GM12878 (cell line): ENCODE measurements at regions of chr5 and their contacts with region 1.

Region 1: GRCh38 chr5:78638423-78638822 is 10.1 kb downstream of the LHFPL2 start:
- DNase-seq: no peak
- ATAC-seq: no peak
- H3K4me3 ChIP-seq: no peak overlapping the region
- H3K27ac ChIP-seq: no peak overlapping the region
- H3K4me1 ChIP-seq: peaks cover 24% of the 10 kb centered on the region
- H3K27me3 ChIP-seq: no peaks in the 10 kb centered on the region
- CTCF ChIP-seq: no peak
- EP300 ChIP-seq: no peak
- POLR2A ChIP-seq: no peak
- RAD21 ChIP-seq: no peak

Region 2: DNA sequence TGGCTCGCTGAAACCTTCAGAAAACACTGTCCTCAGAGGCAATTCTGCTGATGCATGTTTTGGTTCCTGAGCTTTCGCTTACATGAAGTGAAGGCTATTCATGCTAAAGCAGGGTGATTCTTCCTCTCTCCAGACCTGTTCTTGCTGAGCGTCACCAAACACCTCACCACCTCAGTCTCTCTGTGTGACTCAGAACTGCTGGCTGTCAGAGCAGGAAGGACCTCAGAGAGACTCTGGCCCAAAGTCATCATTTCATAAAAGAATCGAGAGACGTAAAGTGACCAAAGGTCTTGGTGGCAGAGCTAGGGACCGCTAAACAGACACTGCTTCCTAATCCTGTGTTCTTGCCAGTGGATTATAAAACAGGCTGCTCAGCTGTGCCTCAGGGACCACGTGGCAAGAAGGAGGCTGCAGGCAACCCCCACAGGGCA is 63.7 kb before region 1 on chr5:
- CTCF ChIA-PET with region 1: interaction called, 4 read pairs
- POLR2A ChIA-PET with region 1: interaction called, 3 read pairs
- RAD21 ChIA-PET with region 1: interaction called, 5 read pairs
- SMC1A ChIA-PET with region 1: interaction called, 10 read pairs
- in situ Hi-C with region 1: no loop called
- intact Hi-C with region 1: loop called (anchors 5 kb)
- DNase-seq: peak; percentile 64
- ATAC-seq: peak; percentile 95
- H3K4me3 ChIP-seq: peak overlapping the region; percentile 1; the same call in 1 of the 2 replicates
- H3K27ac ChIP-seq: peak overlapping the region; percentile 93
- H3K4me1 ChIP-seq: peaks cover 25% of the 10 kb centered on the region
- H3K27me3 ChIP-seq: no peaks in the 10 kb centered on the region
- CTCF ChIP-seq: no peak
- EP300 ChIP-seq: no peak; a peak in 1 of 4 replicates
- POLR2A ChIP-seq: 0 out of 2 replicates have a peak, but pooled peaks have one; percentile 30
- RAD21 ChIP-seq: no peak

Region 3: DNA sequence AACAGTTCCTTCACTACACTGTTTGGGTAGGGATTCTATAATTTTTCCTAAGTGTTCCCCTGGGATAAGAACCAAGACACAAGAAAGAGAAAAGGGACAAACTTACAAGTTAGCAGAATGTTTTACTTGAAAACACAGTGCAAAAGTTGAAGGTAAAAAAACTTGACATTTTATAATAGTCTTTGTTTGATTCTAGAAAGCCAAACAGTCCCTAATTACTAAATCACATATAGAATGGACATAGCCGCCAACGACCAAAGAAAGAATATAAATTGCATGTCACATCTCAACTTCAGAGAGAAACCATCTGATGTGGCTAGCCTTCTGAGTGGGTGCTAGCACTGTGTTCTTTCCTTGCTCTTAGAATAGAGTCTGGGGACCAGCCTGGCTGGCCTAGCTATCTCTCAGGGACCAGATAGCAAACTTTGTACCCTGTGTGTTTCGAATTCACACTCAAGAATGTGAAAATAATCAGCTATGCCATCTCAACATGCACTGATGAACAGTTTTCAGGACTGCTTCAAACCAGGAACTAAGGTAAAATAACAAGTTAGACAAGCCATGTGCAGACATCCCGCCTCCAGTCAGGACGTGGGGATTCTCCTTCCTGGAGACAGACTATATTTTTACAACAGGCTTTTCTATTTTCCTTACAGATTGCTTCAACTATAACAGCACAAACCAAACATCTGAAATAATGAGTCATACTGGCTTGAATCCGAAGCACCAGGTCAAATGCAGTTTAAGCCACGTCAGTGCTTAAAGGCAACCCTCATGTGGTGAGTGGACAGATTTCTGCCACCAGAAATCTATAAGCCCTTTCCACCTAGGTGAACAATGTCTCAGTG is 43.6 kb before region 1 on chr5:
- CTCF ChIA-PET with region 1: no interaction called
- POLR2A ChIA-PET with region 1: interaction called, 3 read pairs
- RAD21 ChIA-PET with region 1: interaction called, 4 read pairs
- SMC1A ChIA-PET with region 1: interaction called, 14 read pairs
- in situ Hi-C with region 1: no loop called
- intact Hi-C with region 1: no loop called
- DNase-seq: no peak
- ATAC-seq: peak; percentile 44
- H3K4me3 ChIP-seq: no peak overlapping the region
- H3K27ac ChIP-seq: no peak overlapping the region; the same call in 1 of the 2 replicates
- H3K4me1 ChIP-seq: peaks cover 26% of the 10 kb centered on the region
- H3K27me3 ChIP-seq: no peaks in the 10 kb centered on the region
- CTCF ChIP-seq: no peak
- EP300 ChIP-seq: no peak
- POLR2A ChIP-seq: no peak
- RAD21 ChIP-seq: no peak

Region 4: GRCh38 chr5:78621291-78621738 is 17.1 kb before region 1 on chr5:
- CTCF ChIA-PET with region 1: interaction called, 9 read pairs
- POLR2A ChIA-PET with region 1: interaction called, 3 read pairs
- RAD21 ChIA-PET with region 1: interaction called, 7 read pairs
- SMC1A ChIA-PET with region 1: interaction called, 14 read pairs
- in situ Hi-C with region 1: no loop called
- intact Hi-C with region 1: no loop called
- DNase-seq: no peak
- ATAC-seq: peak; percentile 48
- H3K4me3 ChIP-seq: no peak overlapping the region
- H3K27ac ChIP-seq: no peak overlapping the region
- H3K4me1 ChIP-seq: no peaks in the 10 kb centered on the region
- H3K27me3 ChIP-seq: no peaks in the 10 kb centered on the region
- CTCF ChIP-seq: no peak
- EP300 ChIP-seq: no peak
- POLR2A ChIP-seq: no peak
- RAD21 ChIP-seq: no peak

Region 5: DNA sequence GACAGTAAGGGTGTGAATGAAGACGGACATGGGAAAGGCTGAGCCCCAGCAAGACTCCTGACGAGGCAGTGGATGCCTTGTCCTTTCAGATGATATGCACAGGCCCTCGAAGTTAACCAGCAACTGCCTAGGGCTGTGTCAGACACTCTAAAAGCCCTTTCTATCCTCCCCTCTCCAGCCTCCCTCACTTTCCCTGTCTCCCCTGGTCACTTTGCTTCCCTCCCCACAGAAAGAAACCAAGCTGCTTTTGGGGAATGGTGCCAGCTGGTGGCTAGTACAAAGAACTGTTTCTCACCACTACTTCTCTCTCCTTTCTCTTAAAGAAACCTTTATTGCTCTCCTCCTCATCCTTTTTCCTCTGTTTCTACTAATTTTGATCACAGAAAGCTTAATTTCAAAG is 11.2 kb before region 1 on chr5:
- CTCF ChIA-PET with region 1: interaction called, 9 read pairs
- POLR2A ChIA-PET with region 1: interaction called, 11 read pairs
- RAD21 ChIA-PET with region 1: interaction called, 9 read pairs
- SMC1A ChIA-PET with region 1: interaction called, 14 read pairs
- in situ Hi-C with region 1: no loop called
- intact Hi-C with region 1: no loop called
- DNase-seq: no peak
- ATAC-seq: no peak
- H3K4me3 ChIP-seq: no peak overlapping the region
- H3K27ac ChIP-seq: no peak overlapping the region
- H3K4me1 ChIP-seq: no peaks in the 10 kb centered on the region
- H3K27me3 ChIP-seq: no peaks in the 10 kb centered on the region
- CTCF ChIP-seq: peak; percentile 25 to 33 (median 28); a peak in 3 of 6 replicates
- EP300 ChIP-seq: no peak
- POLR2A ChIP-seq: no peak
- RAD21 ChIP-seq: peak; percentile 56

Region 6: DNA sequence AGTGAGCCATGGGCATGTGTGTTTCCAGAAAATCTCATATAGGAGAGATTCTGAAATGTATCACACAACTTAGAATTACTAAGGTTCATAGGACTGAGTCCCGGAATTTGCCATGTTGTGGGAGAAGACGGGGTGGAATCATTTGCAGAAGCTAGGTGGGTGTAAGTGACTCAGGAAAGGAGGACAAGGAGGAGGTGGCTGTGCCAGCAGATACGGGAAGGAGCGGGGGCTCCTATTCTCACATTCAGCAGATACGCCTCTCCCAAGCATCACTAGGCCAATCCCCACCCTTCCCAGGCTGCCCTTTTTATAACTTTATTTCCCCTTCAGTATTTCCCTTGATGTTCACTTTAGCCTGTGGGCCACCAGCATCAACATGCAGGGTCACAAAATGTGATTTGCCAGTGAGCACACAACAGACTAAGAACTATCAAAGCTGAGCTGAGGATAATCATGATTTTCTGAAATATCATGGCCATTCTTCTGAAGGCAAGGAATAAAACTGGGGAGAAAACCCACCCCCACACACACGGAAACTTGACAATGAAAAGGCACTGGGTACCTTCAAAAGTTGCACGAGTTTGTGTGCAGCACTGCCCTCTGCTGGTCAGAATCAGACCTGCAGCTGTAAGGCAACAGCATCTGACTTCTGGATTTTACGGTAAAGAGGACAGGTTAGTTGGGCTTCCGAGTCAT is 1219.4 kb after region 1 on chr5:
- CTCF ChIA-PET with region 1: no interaction called
- POLR2A ChIA-PET with region 1: no interaction called
- RAD21 ChIA-PET with region 1: no interaction called
- SMC1A ChIA-PET with region 1: no interaction called
- in situ Hi-C with region 1: no loop called
- intact Hi-C with region 1: no loop called
- DNase-seq: peak; percentile 23
- ATAC-seq: peak; percentile 79
- H3K4me3 ChIP-seq: no peak overlapping the region
- H3K27ac ChIP-seq: no peak overlapping the region
- H3K4me1 ChIP-seq: no peaks in the 10 kb centered on the region
- H3K27me3 ChIP-seq: peaks cover 0 to 2% of the 10 kb centered on the region in 2 experiments; a peak in 1 of 4 replicates
- CTCF ChIP-seq: peak; percentile 87 to 98 (median 97)
- EP300 ChIP-seq: no peak
- POLR2A ChIP-seq: no peak
- RAD21 ChIP-seq: peak; percentile 89